ENCODE measurements at regions of chr5 and their contacts with region 1.

Region 1: GRCh38 chr5:75847561-75848021 is 130.4 kb upstream of the POC5 start:
- DNase-seq: peak; percentile 83
- ATAC-seq: peak; percentile 89
- H3K4me3 ChIP-seq: peak overlapping the region; percentile 12; the same call in 1 of the 2 replicates
- H3K27ac ChIP-seq: peak overlapping the region; percentile 90
- H3K4me1 ChIP-seq: peaks cover 29% of the 10 kb centered on the region
- H3K27me3 ChIP-seq: no peaks in the 10 kb centered on the region
- CTCF ChIP-seq: no peak
- EP300 ChIP-seq: peak; percentile 96 to 98
- POLR2A ChIP-seq: no peak
- RAD21 ChIP-seq: peak; percentile 24

Region 2: DNA sequence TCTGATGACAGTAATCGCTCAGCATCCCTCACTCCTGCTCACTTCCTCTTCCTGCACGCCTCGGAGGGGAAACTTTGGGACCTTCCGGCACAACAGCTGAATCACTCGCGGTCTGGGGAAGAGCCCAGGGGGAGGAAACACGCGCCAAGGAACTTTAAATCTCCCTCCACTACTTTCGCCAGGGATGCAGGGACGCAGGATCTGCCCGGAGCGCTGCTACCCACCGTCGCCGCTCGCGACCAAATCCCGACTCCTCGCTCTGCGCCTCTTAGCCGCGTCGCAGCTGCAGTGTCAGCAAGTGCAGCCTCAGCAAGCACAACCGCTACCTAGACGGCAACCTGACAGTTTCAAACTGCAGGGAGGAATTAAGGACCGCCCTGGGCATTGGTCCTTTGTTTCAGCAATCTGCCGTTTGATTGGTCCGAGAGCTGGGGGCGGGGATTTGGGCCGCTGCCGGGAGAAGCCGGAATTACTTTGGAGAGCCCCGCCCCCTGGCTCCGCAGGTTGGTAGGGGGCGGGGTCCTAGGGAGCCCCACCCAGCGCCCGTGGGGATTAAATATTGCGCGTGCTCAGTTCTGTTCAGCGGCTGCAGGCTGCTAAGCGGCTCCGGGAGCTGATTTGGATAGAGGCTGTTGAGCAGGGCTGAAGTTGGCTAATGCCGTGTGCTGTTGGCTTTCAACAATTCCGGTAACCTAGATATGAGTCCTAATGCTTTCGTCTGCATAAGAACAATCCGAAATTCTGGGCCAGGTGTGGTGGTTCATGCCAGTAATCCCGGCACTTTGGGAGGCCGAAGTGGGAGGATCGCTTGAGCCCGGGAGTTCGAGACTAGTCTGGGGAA is 130.3 kb before region 1 on chr5 and contains the start of gene POC5:
- CTCF ChIA-PET with region 1: no interaction called
- POLR2A ChIA-PET with region 1: no interaction called
- RAD21 ChIA-PET with region 1: no interaction called
- SMC1A ChIA-PET with region 1: no interaction called
- in situ Hi-C with region 1: no loop called
- intact Hi-C with region 1: loop called (anchors 5 kb)
- DNase-seq: peak; percentile 91
- ATAC-seq: peak; percentile 95
- H3K4me3 ChIP-seq: peak within 1 kb of the TSS; percentile 96
- H3K27ac ChIP-seq: peak within 1 kb of the TSS; percentile 98
- H3K4me1 ChIP-seq: no peaks in the 10 kb centered on the region
- H3K27me3 ChIP-seq: no peaks in the 10 kb centered on the region
- CTCF ChIP-seq: no peak
- EP300 ChIP-seq: no peak
- POLR2A ChIP-seq: peak; percentile 100
- RAD21 ChIP-seq: no peak
- polyA plus RNA-seq, gene POC5: 16.6 to 24.7 TPM

Region 3: GRCh38 chr5:75734913-75735789 is 112.4 kb before region 1 on chr5:
- CTCF ChIA-PET with region 1: no interaction called
- POLR2A ChIA-PET with region 1: no interaction called
- RAD21 ChIA-PET with region 1: no interaction called
- SMC1A ChIA-PET with region 1: no interaction called
- in situ Hi-C with region 1: no loop called
- intact Hi-C with region 1: no loop called
- DNase-seq: peak; percentile 5
- ATAC-seq: peak; percentile 81
- H3K4me3 ChIP-seq: no peak overlapping the region
- H3K27ac ChIP-seq: no peak overlapping the region
- H3K4me1 ChIP-seq: no peaks in the 10 kb centered on the region
- H3K27me3 ChIP-seq: no peaks in the 10 kb centered on the region
- CTCF ChIP-seq: peak; percentile 61 to 70 (median 67); a peak in 5 of 6 replicates
- EP300 ChIP-seq: no peak
- POLR2A ChIP-seq: no peak
- RAD21 ChIP-seq: peak; percentile 93

Region 4: DNA sequence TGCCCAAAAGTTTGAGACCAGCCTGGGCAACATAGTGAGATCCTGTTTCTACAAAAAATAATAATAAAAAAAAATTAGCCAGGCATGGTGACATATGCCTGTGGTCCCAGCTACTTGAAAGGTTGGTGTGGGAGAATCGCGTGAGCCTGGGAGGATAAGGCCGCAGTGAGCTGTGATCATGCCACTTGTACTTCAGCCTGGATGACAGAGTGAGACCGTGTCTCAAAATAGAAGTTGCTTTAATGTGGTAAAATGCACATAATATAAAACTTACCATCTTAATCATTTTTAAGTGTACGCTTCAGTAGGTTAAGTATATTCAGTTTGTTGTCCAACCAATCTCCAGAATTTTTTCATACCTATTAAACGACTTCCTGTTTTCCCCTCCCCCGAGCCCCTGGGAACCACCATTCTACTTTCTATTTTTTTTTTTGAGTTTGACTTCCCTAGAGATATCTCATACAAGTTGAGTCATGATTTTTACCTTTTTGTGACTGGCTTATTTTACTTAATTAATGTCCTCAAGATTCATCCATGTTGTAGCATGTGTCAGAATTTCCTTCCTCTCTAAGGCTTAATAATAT is 10.2 kb before region 1 on chr5:
- CTCF ChIA-PET with region 1: interaction called, 9 read pairs
- POLR2A ChIA-PET with region 1: interaction called, 4 read pairs
- RAD21 ChIA-PET with region 1: interaction called, 5 read pairs
- SMC1A ChIA-PET with region 1: interaction called, 10 read pairs
- in situ Hi-C with region 1: no loop called
- intact Hi-C with region 1: no loop called
- DNase-seq: peak; percentile 11
- ATAC-seq: peak; percentile 63
- H3K4me3 ChIP-seq: no peak overlapping the region
- H3K27ac ChIP-seq: no peak overlapping the region
- H3K4me1 ChIP-seq: no peaks in the 10 kb centered on the region
- H3K27me3 ChIP-seq: no peaks in the 10 kb centered on the region
- CTCF ChIP-seq: no peak
- EP300 ChIP-seq: no peak
- POLR2A ChIP-seq: no peak
- RAD21 ChIP-seq: no peak

Region 5: DNA sequence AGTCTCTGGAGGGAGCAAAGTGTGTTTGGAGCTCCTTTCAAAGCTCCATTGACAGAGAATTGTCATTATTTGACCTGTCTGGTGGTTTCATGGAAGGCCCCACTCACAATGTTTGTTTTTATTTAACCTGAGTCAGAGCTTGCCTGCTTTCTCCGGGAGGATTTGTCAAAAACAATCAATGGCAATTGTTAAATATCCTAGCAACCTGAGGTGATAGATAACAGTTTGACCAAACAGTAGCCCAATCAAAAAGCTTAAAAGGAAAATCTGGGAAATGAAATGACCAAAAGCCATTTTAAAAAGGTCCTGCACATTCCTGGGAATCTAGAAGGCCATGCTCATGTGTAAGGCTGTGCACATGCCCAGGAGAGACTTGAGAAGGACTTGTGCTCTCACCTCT is 46.9 kb after region 1 on chr5:
- CTCF ChIA-PET with region 1: no interaction called
- POLR2A ChIA-PET with region 1: no interaction called
- RAD21 ChIA-PET with region 1: no interaction called
- SMC1A ChIA-PET with region 1: no interaction called
- in situ Hi-C with region 1: no loop called
- intact Hi-C with region 1: no loop called
- DNase-seq: no peak
- ATAC-seq: no peak
- H3K4me3 ChIP-seq: no peak overlapping the region
- H3K27ac ChIP-seq: no peak overlapping the region
- H3K4me1 ChIP-seq: no peaks in the 10 kb centered on the region
- H3K27me3 ChIP-seq: no peaks in the 10 kb centered on the region
- CTCF ChIP-seq: no peak
- EP300 ChIP-seq: no peak
- POLR2A ChIP-seq: no peak
- RAD21 ChIP-seq: no peak

Region 6: DNA sequence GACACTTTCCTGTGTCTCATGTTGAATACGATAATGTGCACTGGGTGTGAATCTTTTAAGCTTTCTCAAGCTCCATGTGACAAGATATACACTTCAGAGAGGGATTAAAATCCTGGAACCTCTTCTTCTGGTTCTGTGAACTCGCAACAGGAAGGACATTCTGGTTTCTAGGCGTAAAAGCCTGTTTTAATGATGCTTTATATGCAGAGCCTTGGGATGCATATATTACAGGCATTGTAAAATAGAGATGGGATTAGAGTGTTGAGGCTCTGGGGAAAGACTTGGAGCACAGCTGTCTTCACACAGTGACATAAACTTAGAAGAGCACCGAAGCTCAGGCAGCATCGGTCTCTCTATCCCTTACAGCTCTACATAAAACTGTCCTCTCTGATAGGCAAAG is 127.9 kb after region 1 on chr5:
- CTCF ChIA-PET with region 1: no interaction called
- POLR2A ChIA-PET with region 1: no interaction called
- RAD21 ChIA-PET with region 1: no interaction called
- SMC1A ChIA-PET with region 1: no interaction called
- in situ Hi-C with region 1: no loop called
- intact Hi-C with region 1: no loop called
- DNase-seq: no peak
- ATAC-seq: no peak
- H3K4me3 ChIP-seq: no peak overlapping the region
- H3K27ac ChIP-seq: no peak overlapping the region
- H3K4me1 ChIP-seq: no peaks in the 10 kb centered on the region
- H3K27me3 ChIP-seq: no peaks in the 10 kb centered on the region
- CTCF ChIP-seq: no peak
- EP300 ChIP-seq: no peak
- POLR2A ChIP-seq: no peak
- RAD21 ChIP-seq: no peak

Measured in GM12878 (cell line).